Sigmoid colon (tissue), 7 donors: ENCODE measurements at regions of chr15 and their contacts with region 1.

Region 1: DNA sequence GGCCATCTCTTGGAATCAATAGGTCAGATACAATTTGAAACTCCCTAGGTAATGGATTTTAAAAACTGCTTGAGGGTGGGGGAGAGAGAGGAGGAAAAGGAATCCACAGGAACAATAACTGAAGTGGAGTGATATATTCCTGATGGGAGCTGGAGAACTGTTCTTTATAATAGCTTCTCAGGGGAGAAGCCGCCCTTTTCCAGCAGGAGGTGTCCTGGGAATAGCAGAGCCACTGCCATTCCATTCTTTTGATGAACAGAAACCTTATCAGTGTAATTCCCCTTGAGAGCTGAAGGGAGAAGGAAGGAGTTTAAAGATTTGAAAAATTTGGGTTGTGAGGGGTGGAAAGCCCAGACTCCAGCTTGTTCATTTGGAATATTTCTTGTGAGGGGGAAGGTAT is 504.9 kb upstream of the DPH6 start:
- DNase-seq: no peak
- H3K4me3 ChIP-seq: no peak overlapping the region
- H3K27ac ChIP-seq: no peak overlapping the region
- H3K4me1 ChIP-seq: no peaks in the 10 kb centered on the region
- H3K27me3 ChIP-seq: no peaks in the 10 kb centered on the region
- CTCF ChIP-seq: no peak
- EP300 ChIP-seq: no peak
- POLR2A ChIP-seq: no peak

Region 2: GRCh38 chr15:35479423-35479822 is 571.5 kb before region 1 on chr15:
- intact Hi-C with region 1: no loop called
- DNase-seq: no peak
- H3K4me3 ChIP-seq: no peak overlapping the region
- H3K27ac ChIP-seq: no peak overlapping the region
- H3K4me1 ChIP-seq: peaks cover 0 to 11% (median 0%) of the 10 kb centered on the region in 4 donors
- H3K27me3 ChIP-seq: no peaks in the 10 kb centered on the region
- CTCF ChIP-seq: no peak
- EP300 ChIP-seq: no peak
- POLR2A ChIP-seq: no peak

Region 3: GRCh38 chr15:35998663-35999602 is 52.0 kb before region 1 on chr15:
- intact Hi-C with region 1: loop called (anchors 10 kb)
- DNase-seq: no peak
- H3K4me3 ChIP-seq: no peak overlapping the region
- H3K27ac ChIP-seq: no peak overlapping the region
- H3K4me1 ChIP-seq: no peaks in the 10 kb centered on the region
- H3K27me3 ChIP-seq: no peaks in the 10 kb centered on the region
- CTCF ChIP-seq: no peak
- EP300 ChIP-seq: no peak
- POLR2A ChIP-seq: no peak